ENCODE measurements at regions of chr17 and their contacts with region 1.

Region 1: DNA sequence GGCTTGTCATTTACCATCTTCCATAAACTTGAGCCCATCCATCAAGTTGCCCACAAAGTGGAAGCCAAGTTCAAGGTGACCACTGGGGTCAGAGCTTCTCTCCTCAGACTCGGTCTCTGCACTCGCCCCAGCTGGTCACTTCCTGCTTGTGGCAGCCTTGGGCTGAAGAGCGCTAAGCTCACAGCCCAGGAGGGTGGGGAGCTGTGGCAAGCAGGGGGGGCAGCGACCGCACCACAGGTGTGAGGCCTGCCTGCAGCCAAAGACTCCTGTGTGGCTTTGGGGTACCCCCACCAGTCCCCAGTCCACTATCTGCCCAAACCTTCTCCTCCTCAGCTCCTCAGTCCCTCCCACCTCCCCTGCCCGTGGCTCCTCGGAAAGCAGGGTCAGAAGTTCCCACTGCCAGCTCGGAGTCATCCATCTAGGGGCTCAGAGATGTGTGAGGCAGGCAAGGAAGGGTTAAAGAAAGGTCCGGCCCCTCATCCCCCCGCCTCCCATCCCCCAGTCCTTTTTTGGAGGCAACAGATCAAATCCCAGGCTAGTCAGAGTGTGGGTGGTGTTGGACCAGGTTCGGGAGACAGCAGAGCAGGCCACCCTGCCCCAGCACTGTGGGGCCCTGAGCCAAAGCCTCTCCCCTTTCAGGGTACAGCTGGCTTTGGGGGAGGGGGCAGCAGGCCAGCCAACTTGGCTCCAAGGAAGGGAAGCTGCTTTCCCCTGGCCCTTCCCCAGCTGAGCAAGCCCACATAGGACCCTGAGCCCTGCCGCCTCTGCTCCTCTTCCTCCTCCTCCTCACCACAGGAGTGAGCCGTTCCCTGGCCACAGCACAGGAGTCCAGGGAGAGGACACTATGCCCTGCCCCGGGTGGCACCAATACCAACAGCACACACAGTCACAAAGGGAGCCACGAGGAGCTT is 3.2 kb downstream of the CSF3 start:
- DNase-seq: no peak
- ATAC-seq: no peak
- H3K4me3 ChIP-seq: no peak overlapping the region
- H3K4me3 Mint-ChIP-seq: no peak overlapping the region
- H3K27ac ChIP-seq: no peak overlapping the region
- H3K27ac Mint-ChIP-seq: peak overlapping the region in 2 of 9 donors; percentile 21 to 25
- H3K4me1 ChIP-seq: no peaks in the 10 kb centered on the region
- H3K4me1 Mint-ChIP-seq: peaks cover 0 to 8% (median 5%) of the 10 kb centered on the region in 7 donors
- H3K27me3 ChIP-seq: no peaks in the 10 kb centered on the region
- H3K27me3 Mint-ChIP-seq: peaks cover 0 to 2% (median 0%) of the 10 kb centered on the region in 5 donors

Region 2: GRCh38 chr17:40075201-40075941 is 56.9 kb after region 1 on chr17:
- CTCF ChIA-PET with region 1: interaction called, 14 read pairs
- POLR2A ChIA-PET with region 1: no interaction called
- intact Hi-C with region 1: loop called in 1 of 2 experiments (anchors 1 kb)
- DNase-seq: peak; percentile 45 to 80 (median 63)
- ATAC-seq: peak; percentile 93
- H3K4me3 ChIP-seq: no peak overlapping the region
- H3K4me3 Mint-ChIP-seq: peak overlapping the region in 8 of 10 donors; percentile 35 to 78 (median 71)
- H3K27ac ChIP-seq: peak overlapping the region; percentile 18
- H3K27ac Mint-ChIP-seq: peak overlapping the region in 8 of 9 donors; percentile 42 to 89 (median 68)
- H3K4me1 ChIP-seq: peaks cover 13 to 36% of the 10 kb centered on the region in 2 donors
- H3K4me1 Mint-ChIP-seq: peaks cover 7 to 67% (median 36%) of the 10 kb centered on the region in 7 donors
- H3K27me3 ChIP-seq: no peaks in the 10 kb centered on the region
- H3K27me3 Mint-ChIP-seq: no peaks in the 10 kb centered on the region

Region 3: DNA sequence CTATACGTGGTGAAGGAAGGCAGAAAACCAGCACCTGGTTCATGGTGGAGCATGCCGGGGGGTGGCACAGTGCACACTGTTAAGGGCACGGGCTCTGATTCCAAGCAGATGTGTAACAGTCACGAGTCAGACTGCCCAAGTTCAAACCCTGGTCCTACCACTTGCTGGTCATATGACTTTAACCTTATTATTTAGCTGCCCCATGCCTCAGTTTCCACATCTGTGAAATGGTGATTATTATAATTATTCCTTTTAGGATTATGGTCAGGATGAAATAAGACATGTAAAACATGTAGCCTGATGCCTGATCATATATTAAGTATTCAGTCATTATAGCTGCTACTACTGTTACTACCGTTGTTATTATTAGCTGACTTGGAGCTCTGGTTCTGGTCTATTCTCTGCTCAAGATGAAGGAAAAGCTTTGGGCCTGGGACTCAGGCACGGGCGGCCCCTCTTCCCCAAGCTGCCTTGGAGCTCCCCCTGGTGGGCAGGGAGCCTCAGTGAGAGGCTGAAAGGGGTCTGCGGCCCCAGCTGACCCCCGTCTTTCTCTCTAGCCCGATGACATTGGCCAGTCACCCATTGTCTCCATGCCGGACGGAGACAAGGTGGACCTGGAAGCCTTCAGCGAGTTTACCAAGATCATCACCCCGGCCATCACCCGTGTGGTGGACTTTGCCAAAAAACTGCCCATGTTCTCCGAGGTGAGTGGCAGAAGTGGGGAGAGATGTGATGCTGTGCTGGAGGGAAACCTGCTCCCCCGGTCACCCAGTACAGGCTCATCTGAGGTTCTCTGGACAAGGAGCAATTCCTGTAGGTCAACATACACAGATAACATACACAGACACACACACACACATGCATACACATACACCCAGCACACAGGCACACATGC is 67.9 kb after region 1 on chr17:
- CTCF ChIA-PET with region 1: interaction called, 7 read pairs
- POLR2A ChIA-PET with region 1: interaction called, 5 read pairs
- intact Hi-C with region 1: loop called (anchors 1 kb)
- DNase-seq: peak in 6 of 9 donors; percentile 56 to 69 (median 61)
- ATAC-seq: peak; percentile 76
- H3K4me3 ChIP-seq: no peak overlapping the region
- H3K4me3 Mint-ChIP-seq: peak overlapping the region in 1 of 10 donors; percentile 38
- H3K27ac ChIP-seq: no peak overlapping the region
- H3K27ac Mint-ChIP-seq: peak overlapping the region in 8 of 9 donors; percentile 9 to 70 (median 47)
- H3K4me1 ChIP-seq: peaks cover 0 to 4% of the 10 kb centered on the region in 2 donors
- H3K4me1 Mint-ChIP-seq: peaks cover 4 to 35% (median 21%) of the 10 kb centered on the region in 7 donors
- H3K27me3 ChIP-seq: no peaks in the 10 kb centered on the region
- H3K27me3 Mint-ChIP-seq: no peaks in the 10 kb centered on the region

Region 4: DNA sequence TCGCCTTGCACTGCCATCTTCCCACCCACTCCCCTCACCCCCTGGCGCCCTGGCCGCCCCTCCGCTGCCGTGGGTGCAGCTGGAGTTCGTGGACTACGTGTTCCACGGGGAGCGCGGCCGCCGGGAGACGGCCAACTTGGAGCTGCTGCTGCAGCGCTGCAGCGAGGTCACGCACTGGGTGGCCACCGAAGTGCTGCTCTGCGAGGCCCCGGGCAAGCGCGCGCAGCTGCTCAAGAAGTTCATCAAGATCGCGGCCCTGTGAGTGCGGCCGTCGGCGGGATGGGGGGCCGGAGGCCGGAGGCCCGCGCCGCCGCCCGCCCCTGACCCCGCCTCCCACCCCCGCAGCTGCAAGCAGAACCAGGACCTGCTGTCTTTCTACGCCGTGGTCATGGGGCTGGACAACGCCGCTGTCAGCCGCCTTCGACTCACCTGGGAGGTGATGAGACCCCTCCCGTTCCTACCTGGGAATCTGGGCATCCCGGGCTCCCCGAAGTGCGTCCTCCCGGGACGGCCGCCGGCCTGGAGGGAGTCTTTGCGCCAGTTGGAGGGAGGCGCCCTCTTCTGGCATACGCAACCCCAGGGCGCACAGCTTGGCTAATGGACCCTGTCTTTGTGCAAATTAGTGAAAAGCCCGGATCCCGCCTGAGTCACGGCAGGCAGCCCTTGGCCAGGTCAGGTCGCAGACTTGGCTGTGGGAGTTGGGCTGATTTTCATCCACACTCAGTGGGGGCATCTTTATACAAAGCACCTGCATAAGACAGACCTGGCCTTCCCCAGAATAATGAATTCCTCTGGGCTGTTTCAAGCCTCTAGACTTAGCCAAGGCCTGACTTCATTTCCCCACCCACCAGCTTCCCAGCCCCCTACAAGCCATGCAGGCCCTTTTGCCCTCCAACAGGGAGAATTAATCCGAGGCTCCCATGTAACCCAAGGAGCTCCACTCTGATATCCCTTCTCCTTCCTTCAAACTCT is 173.1 kb after region 1 on chr17:
- CTCF ChIA-PET with region 1: interaction called, 14 read pairs
- POLR2A ChIA-PET with region 1: no interaction called
- intact Hi-C with region 1: loop called (anchors 1 kb)
- DNase-seq: peak; percentile 36 to 73 (median 52)
- ATAC-seq: peak; percentile 92
- H3K4me3 ChIP-seq: peak overlapping the region; percentile 63
- H3K4me3 Mint-ChIP-seq: peak overlapping the region; percentile 88 to 97 (median 94)
- H3K27ac ChIP-seq: peak overlapping the region; percentile 29
- H3K27ac Mint-ChIP-seq: peak overlapping the region in 4 of 9 donors; percentile 22 to 58 (median 36)
- H3K4me1 ChIP-seq: peaks cover 0 to 3% of the 10 kb centered on the region in 2 donors
- H3K4me1 Mint-ChIP-seq: peaks cover 0 to 27% (median 13%) of the 10 kb centered on the region in 7 donors
- H3K27me3 ChIP-seq: no peaks in the 10 kb centered on the region
- H3K27me3 Mint-ChIP-seq: peaks cover 0 to 4% (median 0%) of the 10 kb centered on the region in 5 donors

Region 5: GRCh38 chr17:40287494-40288369 is 269.3 kb after region 1 on chr17 and contains the start of gene CDC6:
- CTCF ChIA-PET with region 1: interaction called, 3 read pairs
- POLR2A ChIA-PET with region 1: no interaction called
- intact Hi-C with region 1: loop called (anchors 1 kb)
- DNase-seq: peak; percentile 90 to 99 (median 98)
- ATAC-seq: peak; percentile 97
- H3K4me3 ChIP-seq: peak within 1 kb of the TSS; percentile 70
- H3K4me3 Mint-ChIP-seq: peak within 1 kb of the TSS; percentile 93 to 99 (median 96)
- H3K27ac ChIP-seq: peak within 1 kb of the TSS; percentile 63
- H3K27ac Mint-ChIP-seq: peak within 1 kb of the TSS; percentile 84 to 98 (median 91)
- H3K4me1 ChIP-seq: peaks cover 3 to 11% of the 10 kb centered on the region in 2 donors
- H3K4me1 Mint-ChIP-seq: peaks cover 8 to 41% (median 22%) of the 10 kb centered on the region in 7 donors
- H3K27me3 ChIP-seq: no peaks in the 10 kb centered on the region
- H3K27me3 Mint-ChIP-seq: no peaks in the 10 kb centered on the region
- total RNA-seq, gene CDC6: 0.51 to 73.6 (median 0.85) TPM

Measured in naive thymus-derived CD4-positive, alpha-beta T cell (primary cell).